RWPE1 (cell line): ENCODE measurements at regions of chr15 and their contacts with region 1.

Region 1: GRCh38 chr15:81480645-81481053 is 106.6 kb upstream of the TMC3 start:
- DNase-seq: peak; percentile 34
- H3K27ac ChIP-seq: no peak overlapping the region
- CTCF ChIP-seq: peak; percentile 87

Region 2: DNA sequence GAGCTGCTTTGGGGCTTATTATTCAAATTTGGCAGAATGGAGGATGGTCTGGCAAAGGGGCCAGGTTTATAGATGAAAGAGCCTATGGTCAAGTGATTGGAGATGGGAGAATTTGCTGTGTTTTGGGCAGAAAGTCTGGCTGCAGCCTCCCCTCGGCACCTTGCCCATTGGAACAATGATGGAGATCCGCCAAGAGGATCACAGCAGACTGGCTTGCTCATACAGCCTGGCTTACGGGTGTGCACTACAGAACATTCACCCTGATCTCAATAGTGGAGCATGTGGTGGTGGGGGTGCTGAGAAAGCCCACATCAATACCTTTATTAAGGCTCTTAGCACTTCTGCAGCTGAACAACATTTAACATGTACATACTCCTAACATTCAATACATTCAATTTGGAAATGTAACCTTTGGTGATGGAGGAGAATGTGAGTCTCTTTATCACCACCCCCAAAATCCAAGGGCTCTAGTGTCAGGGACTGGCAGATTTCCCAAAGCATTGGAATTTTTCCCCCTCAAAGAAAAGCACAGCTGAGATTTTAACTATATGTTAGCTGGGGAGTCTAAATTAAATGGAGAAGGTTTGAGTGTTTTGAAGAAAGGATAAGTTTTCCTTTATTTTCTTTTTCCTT is 11.8 kb after region 1 on chr15:
- CTCF ChIA-PET with region 1: no interaction called
- POLR2A ChIA-PET with region 1: no interaction called
- DNase-seq: no peak
- H3K27ac ChIP-seq: no peak overlapping the region; the same call in 1 of the 2 replicates
- CTCF ChIP-seq: no peak

Region 3: DNA sequence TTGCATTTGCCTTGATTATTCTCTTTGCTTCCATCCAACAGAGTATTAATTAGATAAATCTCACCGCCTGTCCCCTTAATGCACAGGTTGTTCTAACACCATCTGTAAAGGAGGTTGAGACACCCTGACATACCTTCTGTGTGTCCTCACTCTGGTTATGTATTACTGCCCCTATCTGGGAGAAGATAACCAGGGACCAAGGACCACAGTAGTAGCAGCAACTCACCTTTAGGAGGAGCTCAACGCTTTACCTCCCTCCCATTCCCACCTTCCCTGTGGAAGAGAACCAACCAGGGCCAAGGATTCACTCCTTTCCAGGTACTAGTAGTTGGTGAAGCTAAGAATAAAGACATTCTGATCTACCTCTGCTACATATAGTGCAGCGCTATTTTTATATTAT is 332.5 kb after region 1 on chr15:
- CTCF ChIA-PET with region 1: interaction called, 3 read pairs
- POLR2A ChIA-PET with region 1: interaction called, 13 read pairs
- DNase-seq: peak; percentile 26
- H3K27ac ChIP-seq: no peak overlapping the region
- CTCF ChIP-seq: peak; percentile 16; the same call in 1 of the 2 replicates